OCI-LY7 (cell line): ENCODE measurements at regions of chr1 and their contacts with region 1.

Region 1: GRCh38 chr1:191993549-191993948 is 164.7 kb upstream of the RGS18 start:
- DNase-seq: peak; percentile 1
- H3K4me3 ChIP-seq: no peak overlapping the region
- H3K27ac ChIP-seq: no peak overlapping the region
- H3K4me1 ChIP-seq: no peaks in the 10 kb centered on the region
- CTCF ChIP-seq: no peak; the same call in 1 of the 2 replicates

Region 2: DNA sequence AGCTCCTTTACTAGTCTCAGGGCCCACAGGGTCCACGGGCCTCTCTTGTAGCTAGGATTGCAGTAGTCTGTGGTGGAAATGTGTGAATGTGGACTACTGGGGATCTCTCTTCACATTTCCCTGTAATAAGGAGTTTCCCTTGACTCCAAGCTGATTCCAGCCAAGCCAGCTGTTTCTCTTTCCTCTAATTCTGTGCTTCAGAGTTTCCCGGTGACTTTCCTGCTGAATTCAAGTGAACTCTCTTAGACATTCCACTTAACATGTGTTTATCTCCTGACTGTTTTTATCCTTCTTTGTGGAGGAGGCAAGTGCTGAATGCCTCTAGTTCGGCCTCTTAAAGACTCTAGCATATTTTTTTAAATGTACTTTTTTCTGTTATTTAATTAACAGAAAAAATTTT is 189.2 kb before region 1 on chr1:
- CTCF ChIA-PET with region 1: no interaction called
- POLR2A ChIA-PET with region 1: no interaction called
- intact Hi-C with region 1: no loop called
- DNase-seq: no peak
- H3K4me3 ChIP-seq: no peak overlapping the region
- H3K27ac ChIP-seq: no peak overlapping the region
- H3K4me1 ChIP-seq: no peaks in the 10 kb centered on the region
- CTCF ChIP-seq: no peak

Region 3: DNA sequence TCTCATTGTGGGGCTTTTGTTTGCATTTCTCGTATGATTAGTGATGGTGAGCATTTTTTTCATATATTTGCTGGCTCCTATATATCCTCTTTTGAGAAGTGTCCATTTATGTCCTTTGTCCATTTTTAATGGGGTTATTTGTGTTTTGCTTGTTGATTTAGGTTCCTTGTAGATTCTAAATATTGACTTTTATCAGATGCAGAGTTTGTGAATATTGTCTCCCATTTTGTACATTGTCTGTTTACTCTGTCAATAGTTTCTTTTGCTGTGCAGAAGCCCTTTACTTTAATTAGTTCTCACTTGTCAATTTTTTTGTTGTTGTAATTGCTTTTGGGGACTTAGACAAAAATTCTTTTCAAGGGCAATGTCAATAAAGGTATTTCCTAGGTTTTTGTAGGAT is 54.8 kb before region 1 on chr1:
- CTCF ChIA-PET with region 1: no interaction called
- POLR2A ChIA-PET with region 1: no interaction called
- intact Hi-C with region 1: no loop called
- DNase-seq: no peak
- H3K4me3 ChIP-seq: no peak overlapping the region
- H3K27ac ChIP-seq: no peak overlapping the region
- H3K4me1 ChIP-seq: no peaks in the 10 kb centered on the region
- CTCF ChIP-seq: no peak

Region 4: GRCh38 chr1:192445848-192446489 is 452.4 kb after region 1 on chr1:
- CTCF ChIA-PET with region 1: no interaction called
- POLR2A ChIA-PET with region 1: no interaction called
- intact Hi-C with region 1: loop called (anchors 5 kb)
- DNase-seq: peak; percentile 53
- H3K4me3 ChIP-seq: no peak overlapping the region
- H3K27ac ChIP-seq: no peak overlapping the region
- H3K4me1 ChIP-seq: no peaks in the 10 kb centered on the region
- CTCF ChIP-seq: peak; percentile 98